B cell (primary cell): ENCODE measurements at regions of chr20 and their contacts with region 1.

Region 1: GRCh38 chr20:13819885-13820645 is 35.2 kb downstream of the NDUFAF5 start:
- DNase-seq: peak; percentile 51
- ATAC-seq: peak; percentile 49
- H3K4me3 ChIP-seq: no peak overlapping the region
- H3K4me3 Mint-ChIP-seq: no peak overlapping the region
- H3K27ac ChIP-seq: no peak overlapping the region
- H3K27ac Mint-ChIP-seq: no peak overlapping the region
- H3K4me1 ChIP-seq: no peaks in the 10 kb centered on the region
- H3K4me1 Mint-ChIP-seq: no peaks in the 10 kb centered on the region
- H3K27me3 ChIP-seq: no peaks in the 10 kb centered on the region
- H3K27me3 Mint-ChIP-seq: no peaks in the 10 kb centered on the region
- CTCF ChIP-seq: peak; percentile 86

Region 2: GRCh38 chr20:14055127-14055742 is 235.2 kb after region 1 on chr20:
- CTCF ChIA-PET with region 1: interaction called, 21 read pairs
- POLR2A ChIA-PET with region 1: no interaction called
- intact Hi-C with region 1: no loop called
- DNase-seq: peak; percentile 51
- ATAC-seq: no peak
- H3K4me3 ChIP-seq: no peak overlapping the region
- H3K4me3 Mint-ChIP-seq: no peak overlapping the region
- H3K27ac ChIP-seq: no peak overlapping the region
- H3K27ac Mint-ChIP-seq: no peak overlapping the region
- H3K4me1 ChIP-seq: no peaks in the 10 kb centered on the region
- H3K4me1 Mint-ChIP-seq: no peaks in the 10 kb centered on the region
- H3K27me3 ChIP-seq: no peaks in the 10 kb centered on the region
- H3K27me3 Mint-ChIP-seq: no peaks in the 10 kb centered on the region
- CTCF ChIP-seq: peak; percentile 89

Region 3: GRCh38 chr20:14189794-14190402 is 369.8 kb after region 1 on chr20:
- CTCF ChIA-PET with region 1: no interaction called
- POLR2A ChIA-PET with region 1: no interaction called
- intact Hi-C with region 1: no loop called
- DNase-seq: no peak
- ATAC-seq: no peak
- H3K4me3 ChIP-seq: no peak overlapping the region
- H3K4me3 Mint-ChIP-seq: no peak overlapping the region
- H3K27ac ChIP-seq: no peak overlapping the region
- H3K27ac Mint-ChIP-seq: no peak overlapping the region
- H3K4me1 ChIP-seq: no peaks in the 10 kb centered on the region
- H3K4me1 Mint-ChIP-seq: no peaks in the 10 kb centered on the region
- H3K27me3 ChIP-seq: no peaks in the 10 kb centered on the region
- H3K27me3 Mint-ChIP-seq: peaks cover 8% of the 10 kb centered on the region
- CTCF ChIP-seq: no peak